Prostate gland (tissue), 2 donors: ENCODE measurements at regions of chr1 and their contacts with region 1.

Region 1: DNA sequence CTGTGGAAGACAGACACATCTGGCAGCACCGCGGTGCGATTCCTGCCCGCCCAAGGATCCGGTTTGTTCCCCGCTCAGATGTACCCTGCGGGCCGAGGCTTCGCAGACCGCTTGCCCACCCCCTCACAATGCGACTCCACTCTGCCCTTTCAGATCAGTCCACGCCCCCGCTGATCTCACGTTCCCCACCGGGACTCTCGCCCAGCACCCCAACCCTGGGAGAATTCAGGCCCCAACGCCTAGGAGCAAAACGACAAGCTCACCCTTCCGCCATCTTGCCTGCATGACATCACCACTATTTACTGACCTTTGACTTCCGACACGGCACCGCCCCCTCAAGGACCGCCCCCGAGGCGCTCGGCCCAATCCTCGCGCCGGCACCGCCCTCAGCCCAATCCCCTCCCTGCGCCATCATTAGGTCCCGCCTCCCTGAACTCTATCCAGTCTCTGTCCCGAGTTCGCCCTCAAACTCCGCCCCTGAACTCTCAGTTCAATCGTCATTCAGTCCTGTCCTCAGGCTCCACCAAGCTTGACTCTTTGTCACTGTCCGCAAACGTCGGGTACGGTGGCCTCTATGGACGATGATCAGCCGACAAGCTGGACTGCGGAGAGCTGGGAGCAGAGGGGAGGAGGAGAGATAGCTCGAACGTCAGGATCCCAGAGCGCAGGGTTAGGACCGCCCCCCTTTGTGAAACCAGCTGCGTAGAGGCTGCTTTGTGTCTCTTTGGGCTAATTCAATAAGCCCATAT is at the start of gene BSDC1:
- DNase-seq: peak; percentile 99
- H3K4me3 ChIP-seq: peak within 1 kb of the TSS; percentile 74 to 79
- H3K27ac ChIP-seq: peak within 1 kb of the TSS; percentile 94 to 96
- H3K4me1 ChIP-seq: peaks cover 9% of the 10 kb centered on the region
- H3K27me3 ChIP-seq: no peaks in the 10 kb centered on the region
- CTCF ChIP-seq: no peak
- POLR2A ChIP-seq: peak; percentile 96
- total RNA-seq, gene BSDC1: 78.3 to 248 TPM

Region 2: GRCh38 chr1:32221980-32222755 is 172.1 kb before region 1 on chr1 and contains the starts of genes EIF3I and TMEM234:
- intact Hi-C with region 1: loop called (anchors 10 kb)
- DNase-seq: peak; percentile 93
- H3K4me3 ChIP-seq: peak within 1 kb of the TSS; percentile 74 to 95
- H3K27ac ChIP-seq: peak within 1 kb of the TSS; percentile 88 to 90
- H3K4me1 ChIP-seq: peaks cover 19% of the 10 kb centered on the region
- H3K27me3 ChIP-seq: no peaks in the 10 kb centered on the region
- CTCF ChIP-seq: no peak
- POLR2A ChIP-seq: peak; percentile 69
- total RNA-seq, gene EIF3I: 158 to 181 TPM
- total RNA-seq, gene TMEM234: 17.9 to 31.7 TPM

Region 3: GRCh38 chr1:32286763-32287162 is 107.6 kb before region 1 on chr1:
- intact Hi-C with region 1: no loop called
- DNase-seq: no peak
- H3K4me3 ChIP-seq: no peak overlapping the region
- H3K27ac ChIP-seq: no peak overlapping the region
- H3K4me1 ChIP-seq: peaks cover 8% of the 10 kb centered on the region
- H3K27me3 ChIP-seq: no peaks in the 10 kb centered on the region
- CTCF ChIP-seq: no peak
- POLR2A ChIP-seq: no peak